Activated T-helper 2 cell treated with anti-CD3 and anti-CD28 coated beads, Interferon-gamma antibody, Interleukin-2, Interleukin-4, amounts not matched to agents 10 μg/mL and 5 μg/mL and 100 μg/mL, durations not matched to agents 14 hours and 24 hours and 36 hours (primary cell): ENCODE measurements at regions of chr17 and their contacts with region 1.

Region 1: DNA sequence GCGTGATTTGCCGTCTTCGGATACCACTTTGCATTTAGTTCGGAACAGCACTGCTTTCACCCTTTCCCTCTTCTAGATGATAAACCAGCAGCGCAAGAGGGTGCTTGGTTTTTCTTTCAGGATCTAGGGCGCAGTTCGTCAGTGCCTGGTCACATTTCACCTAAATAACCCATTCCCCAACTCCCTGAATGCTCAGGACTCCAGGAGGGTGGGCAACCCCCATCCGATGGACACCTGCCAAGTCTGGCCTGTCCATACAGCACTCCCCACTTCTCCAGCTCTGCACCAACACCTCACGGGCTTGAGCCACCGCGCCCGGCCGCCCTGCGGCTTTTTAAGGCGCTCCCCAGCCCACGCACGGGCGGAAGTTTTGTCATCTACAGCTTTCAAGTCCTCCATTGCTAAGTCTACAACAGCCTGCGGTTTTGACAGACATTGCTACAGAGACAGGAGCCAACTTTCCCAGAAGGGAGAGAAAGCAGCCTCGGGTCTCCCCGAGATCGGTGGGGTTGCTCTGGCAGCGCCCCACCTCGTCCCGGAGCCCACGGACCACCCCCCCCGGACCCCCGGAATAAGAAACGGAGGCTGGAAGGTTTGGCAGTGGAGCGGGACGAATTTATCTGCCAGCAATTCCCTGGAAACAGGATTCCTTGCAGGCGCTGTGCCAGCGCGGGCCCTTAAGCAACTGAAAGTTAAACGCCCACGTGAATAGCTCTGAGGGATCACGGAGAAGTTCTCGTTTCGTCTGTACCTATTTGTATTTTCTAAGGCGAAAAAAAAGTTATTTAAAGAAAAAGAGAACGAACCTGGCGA is 38.6 kb upstream of the SLFN13 start:
- DNase-seq: peak; percentile 65
- H3K4me3 Mint-ChIP-seq: peak overlapping the region; percentile 83
- H3K27ac Mint-ChIP-seq: peak overlapping the region; percentile 94
- H3K4me1 Mint-ChIP-seq: peaks cover 49% of the 10 kb centered on the region
- H3K27me3 Mint-ChIP-seq: no peaks in the 10 kb centered on the region

Region 2: GRCh38 chr17:35373534-35373983 is 113.6 kb before region 1 on chr17 and contains the start of gene SLFN11:
- intact Hi-C with region 1: loop called (anchors 2 kb)
- DNase-seq: peak; percentile 81
- H3K4me3 Mint-ChIP-seq: peak within 1 kb of the TSS; percentile 96
- H3K27ac Mint-ChIP-seq: peak within 1 kb of the TSS; percentile 96
- H3K4me1 Mint-ChIP-seq: peaks cover 56% of the 10 kb centered on the region
- H3K27me3 Mint-ChIP-seq: peaks cover 3% of the 10 kb centered on the region
- total RNA-seq, gene SLFN11: 112 and 114 TPM in 2 replicates

Region 3: DNA sequence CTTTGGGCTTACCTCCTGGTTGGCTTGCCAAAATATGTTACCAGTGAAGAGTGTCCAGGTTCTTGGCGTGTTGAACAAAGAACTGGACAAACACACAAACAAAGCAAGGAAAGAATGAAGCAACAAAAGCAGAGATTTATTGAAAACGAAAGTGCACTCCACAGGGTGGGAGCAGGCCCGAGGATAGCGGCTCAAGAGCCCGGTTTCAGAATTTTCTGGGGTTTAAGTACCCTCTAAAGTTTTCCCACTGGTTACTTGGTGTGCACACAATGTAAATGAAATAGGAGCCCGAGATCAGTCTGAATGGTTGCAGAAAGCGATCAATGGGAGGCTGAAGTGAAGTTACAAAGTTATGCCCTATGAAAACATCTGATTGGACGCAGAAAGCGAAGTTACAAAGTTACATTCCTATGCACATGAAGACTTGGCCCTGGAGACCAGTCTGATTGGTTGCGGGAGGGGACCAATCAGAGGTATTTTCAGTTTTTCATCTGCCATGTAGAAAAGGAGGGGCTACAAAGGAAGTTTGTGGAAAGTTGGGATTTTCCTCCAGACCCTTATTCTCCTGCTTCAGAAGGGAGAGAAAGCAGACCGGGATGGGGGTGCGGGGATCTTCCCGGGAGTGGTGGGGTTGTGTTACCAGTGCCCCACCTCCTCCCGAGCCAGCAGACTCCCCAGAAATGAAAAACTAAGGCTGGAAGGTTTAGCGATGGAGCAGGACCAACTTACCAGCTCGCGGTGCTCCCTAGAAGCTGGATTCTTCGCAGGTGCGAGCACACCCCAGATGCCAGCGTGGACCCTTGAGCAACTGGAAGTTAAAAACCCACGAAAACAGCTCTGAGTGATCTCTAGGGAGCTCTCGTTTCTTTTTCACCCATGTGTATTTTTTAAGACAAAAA is 54.7 kb before region 1 on chr17 and contains the start of gene SLFN12:
- intact Hi-C with region 1: loop called (anchors 5 kb)
- DNase-seq: peak; percentile 34
- H3K4me3 Mint-ChIP-seq: peak within 1 kb of the TSS; percentile 90
- H3K27ac Mint-ChIP-seq: peak within 1 kb of the TSS; percentile 94
- H3K4me1 Mint-ChIP-seq: peaks cover 51% of the 10 kb centered on the region
- H3K27me3 Mint-ChIP-seq: no peaks in the 10 kb centered on the region
- total RNA-seq, gene SLFN12: 7.5 and 8.8 TPM in 2 replicates

Region 4: DNA sequence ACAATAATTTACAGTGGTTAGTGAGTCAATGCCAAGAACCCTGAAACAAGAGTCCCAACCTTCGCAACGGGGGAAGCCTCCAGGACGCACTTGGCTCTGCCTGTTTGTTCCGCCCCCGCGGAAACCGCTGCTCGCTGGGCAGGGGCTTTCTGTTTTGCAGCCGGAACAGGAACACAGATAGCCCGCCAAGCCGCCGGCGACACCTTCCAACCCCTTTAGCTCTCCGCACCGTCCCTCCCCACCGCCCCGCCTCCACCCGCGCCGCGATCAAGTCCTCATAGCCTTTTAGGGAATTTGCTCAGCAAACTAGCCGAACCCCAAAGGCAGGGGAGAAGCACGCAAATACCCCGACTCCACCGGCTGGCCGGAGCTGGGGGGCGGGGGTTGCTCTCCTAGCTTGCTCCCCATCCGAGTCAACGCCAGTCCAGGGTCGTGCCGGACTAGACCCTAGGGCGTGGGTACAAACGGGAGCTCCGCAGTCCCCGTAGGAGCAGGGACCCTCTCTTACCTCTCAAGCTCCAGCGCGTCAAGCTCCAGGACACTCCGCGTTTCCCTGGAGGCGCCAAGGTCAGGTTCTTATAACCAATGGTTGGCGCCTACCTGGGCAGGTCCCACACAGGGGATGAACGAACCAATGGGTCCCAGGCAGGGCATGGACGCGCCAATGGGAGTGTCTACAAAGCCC is 38.8 kb before region 1 on chr17 and contains the start of gene SLFN13:
- intact Hi-C with region 1: loop called (anchors 1 kb)
- DNase-seq: peak; percentile 83
- H3K4me3 Mint-ChIP-seq: peak within 1 kb of the TSS; percentile 65
- H3K27ac Mint-ChIP-seq: peak within 1 kb of the TSS; percentile 79
- H3K4me1 Mint-ChIP-seq: peaks cover 16% of the 10 kb centered on the region
- H3K27me3 Mint-ChIP-seq: no peaks in the 10 kb centered on the region
- total RNA-seq, gene SLFN13: 41.9 and 42.6 TPM in 2 replicates

Region 5: DNA sequence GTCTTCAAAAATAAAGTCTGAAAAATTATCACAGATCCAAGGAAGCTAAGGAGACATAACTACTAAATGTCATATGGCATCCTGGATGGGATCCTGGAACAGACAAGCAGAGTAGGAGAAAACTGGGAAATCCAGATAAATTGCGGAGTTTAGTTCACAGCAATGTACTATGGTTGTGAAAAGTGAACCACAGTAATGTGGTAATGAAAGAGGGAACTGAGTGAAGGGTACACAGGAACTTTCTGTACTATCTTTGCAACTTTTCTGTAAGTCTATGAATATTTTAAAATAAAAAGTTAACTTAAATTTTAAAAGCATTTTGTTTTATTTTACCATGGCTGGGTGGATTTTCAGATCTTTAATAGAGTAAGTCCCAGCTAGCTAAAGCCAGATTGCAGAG is 34.0 kb after region 1 on chr17:
- intact Hi-C with region 1: loop called (anchors 5 kb)
- DNase-seq: no peak
- H3K4me3 Mint-ChIP-seq: no peak overlapping the region
- H3K27ac Mint-ChIP-seq: peak overlapping the region; percentile 93
- H3K4me1 Mint-ChIP-seq: peaks cover 83% of the 10 kb centered on the region
- H3K27me3 Mint-ChIP-seq: no peaks in the 10 kb centered on the region